Right cardiac atrium (tissue), 5 donors: ENCODE measurements at regions of chr17 and their contacts with region 1.

Region 1: DNA sequence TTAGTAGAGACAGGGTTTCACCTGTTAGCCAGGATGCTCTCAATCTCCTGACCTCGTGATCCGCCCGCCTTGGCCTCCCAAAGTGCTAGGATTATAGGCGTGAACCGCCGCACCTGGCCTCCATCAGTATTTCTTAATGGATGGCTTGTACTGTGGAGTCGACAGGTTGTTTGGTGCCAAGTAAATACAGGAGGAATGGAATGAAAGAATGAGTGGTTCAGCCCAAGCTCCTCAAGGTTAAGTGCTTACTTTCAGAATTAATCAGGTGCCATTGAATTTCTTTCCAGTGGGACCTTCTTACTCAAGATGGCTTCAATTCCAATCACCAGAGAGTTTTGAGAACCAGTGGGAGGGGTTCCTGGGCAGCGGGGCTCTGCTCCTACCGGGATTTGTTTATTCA is 25.0 kb downstream of the ALOX15 start:
- DNase-seq: no peak
- ATAC-seq: no peak
- H3K4me3 ChIP-seq: no peak overlapping the region
- H3K27ac ChIP-seq: no peak overlapping the region
- H3K4me1 ChIP-seq: no peaks in the 10 kb centered on the region
- H3K27me3 ChIP-seq: no peaks in the 10 kb centered on the region

Region 2: DNA sequence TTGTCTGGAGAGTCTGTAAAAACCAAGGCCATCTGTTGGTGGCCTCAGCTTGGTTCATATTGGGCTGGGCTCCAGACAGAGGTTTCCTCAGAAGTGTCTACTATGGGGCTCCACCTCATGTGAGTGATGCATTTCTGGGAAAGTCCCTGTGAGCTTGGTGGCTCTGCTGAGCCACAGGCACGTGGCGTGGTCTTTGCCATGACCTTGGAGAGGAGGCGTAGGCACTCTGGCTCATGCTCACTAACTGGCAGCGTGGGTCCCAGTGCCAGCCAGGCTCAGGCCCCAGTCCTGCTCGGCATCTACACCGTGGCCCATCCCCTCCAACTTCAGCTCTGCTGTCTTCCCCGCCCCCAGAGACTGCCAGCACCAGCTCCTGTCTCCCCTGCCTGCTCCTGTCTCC is 42.8 kb before region 1 on chr17:
- intact Hi-C with region 1: loop called in 1 of 4 experiments (anchors 5 kb)
- DNase-seq: peak in 2 of 3 donors; percentile 41 to 48
- ATAC-seq: no peak
- H3K4me3 ChIP-seq: no peak overlapping the region
- H3K27ac ChIP-seq: no peak overlapping the region
- H3K4me1 ChIP-seq: no peaks in the 10 kb centered on the region
- H3K27me3 ChIP-seq: no peaks in the 10 kb centered on the region